ENCODE measurements at regions of chr18 and their contacts with region 1.

Region 1: GRCh38 chr18:5868218-5869115 is 26.9 kb downstream of the TMEM200C start:
- DNase-seq: peak; percentile 88
- ATAC-seq: peak; percentile 99
- H3K4me3 ChIP-seq: no peak overlapping the region
- H3K27ac ChIP-seq: no peak overlapping the region
- H3K4me1 ChIP-seq: no peaks in the 10 kb centered on the region
- H3K27me3 ChIP-seq: no peaks in the 10 kb centered on the region; the same call in 1 of the 2 replicates
- CTCF ChIP-seq: peak; percentile 96
- POLR2A ChIP-seq: no peak
- RAD21 ChIP-seq: peak; percentile 90

Region 2: DNA sequence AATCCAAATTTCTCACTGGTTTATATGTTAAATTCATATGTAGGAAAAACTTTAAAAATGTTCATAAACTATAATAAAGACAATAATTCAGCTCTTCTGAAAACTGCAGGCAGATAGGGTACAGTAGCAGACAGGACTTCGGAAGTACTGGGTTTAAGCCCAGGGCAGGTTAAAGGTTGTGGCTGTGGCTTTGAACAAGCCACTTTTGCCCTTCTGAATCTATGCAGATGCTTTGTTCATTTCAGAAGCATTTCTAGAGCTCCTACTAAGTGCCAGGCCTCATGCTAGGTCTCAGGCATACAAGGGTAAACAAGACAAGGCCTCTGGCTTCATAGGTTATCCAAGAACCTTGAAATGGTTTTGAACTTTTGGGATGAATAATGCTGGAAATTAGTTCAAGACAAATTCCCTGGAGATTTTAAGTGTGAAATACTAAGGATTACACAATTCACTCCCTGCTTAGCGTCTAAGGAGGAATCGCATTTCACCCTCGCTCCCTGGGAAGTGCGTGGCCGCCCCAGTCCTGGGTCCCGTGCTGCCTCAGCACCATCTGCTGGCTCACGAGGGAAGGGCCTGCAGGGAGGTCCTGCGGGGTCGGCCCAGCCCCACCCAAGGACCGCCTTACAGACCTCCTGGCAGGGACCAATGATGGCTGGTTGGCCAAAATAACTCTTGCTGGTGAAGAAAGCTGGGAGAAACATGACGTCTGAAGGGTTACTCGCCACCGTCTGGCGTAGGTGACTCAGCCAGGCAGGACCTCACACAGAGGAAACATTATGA is 613.9 kb after region 1 on chr18:
- CTCF ChIA-PET with region 1: interaction called, 3 read pairs
- POLR2A ChIA-PET with region 1: no interaction called
- dilution Hi-C with region 1: no loop called
- in situ Hi-C with region 1: no loop called
- intact Hi-C with region 1: loop called (anchors 1 kb)
- DNase-seq: peak; percentile 67
- ATAC-seq: peak; percentile 98
- H3K4me3 ChIP-seq: no peak overlapping the region
- H3K27ac ChIP-seq: no peak overlapping the region
- H3K4me1 ChIP-seq: no peaks in the 10 kb centered on the region
- H3K27me3 ChIP-seq: peaks cover 2% of the 10 kb centered on the region; the same call in 1 of the 2 replicates
- CTCF ChIP-seq: peak; percentile 54
- POLR2A ChIP-seq: no peak
- RAD21 ChIP-seq: peak; percentile 67

Region 3: DNA sequence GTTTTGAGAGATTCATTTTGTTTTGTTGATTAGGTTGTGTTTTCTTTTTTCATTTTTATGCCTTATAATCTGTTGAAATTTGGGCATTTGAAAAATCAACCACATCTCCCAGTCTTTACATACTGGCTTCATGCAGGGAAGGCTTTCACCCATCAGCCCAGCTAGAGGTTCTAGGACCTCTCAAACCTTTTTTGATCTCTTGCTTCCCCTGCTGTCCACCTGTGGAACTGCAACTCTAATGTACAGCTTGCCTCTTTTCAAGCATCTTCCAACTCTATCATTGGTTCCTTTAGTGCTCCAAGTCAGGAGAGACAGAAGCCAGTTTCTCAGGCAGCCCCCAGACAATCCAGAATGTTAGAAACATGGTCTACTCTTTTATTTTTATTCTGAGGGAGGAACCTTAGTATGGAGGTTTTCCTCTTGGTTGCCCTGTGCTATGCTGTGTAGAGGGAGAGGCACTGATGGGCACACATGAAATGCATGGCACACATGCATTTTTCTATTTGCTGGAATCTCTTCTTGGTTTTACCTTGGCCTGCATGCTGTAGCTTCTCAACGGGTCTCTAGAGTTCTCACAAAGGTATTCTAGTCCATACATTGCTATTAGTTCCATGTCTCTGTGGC is 653.4 kb after region 1 on chr18:
- CTCF ChIA-PET with region 1: interaction called, 8 read pairs
- POLR2A ChIA-PET with region 1: no interaction called
- dilution Hi-C with region 1: no loop called
- in situ Hi-C with region 1: loop called (anchors 25 kb)
- intact Hi-C with region 1: loop called (anchors 1 kb)
- DNase-seq: peak; percentile 47
- ATAC-seq: peak; percentile 72
- H3K4me3 ChIP-seq: no peak overlapping the region
- H3K27ac ChIP-seq: no peak overlapping the region
- H3K4me1 ChIP-seq: no peaks in the 10 kb centered on the region
- H3K27me3 ChIP-seq: no peaks in the 10 kb centered on the region
- CTCF ChIP-seq: peak; percentile 74
- POLR2A ChIP-seq: no peak
- RAD21 ChIP-seq: peak; percentile 78

Measured in IMR-90 (cell line).